ENCODE measurements at regions of chr11 and their contacts with region 1.

Region 1: GRCh38 chr11:111177037-111177871 is 68.3 kb upstream of the POU2AF2 start:
- DNase-seq: peak; percentile 76 to 83 (median 78)
- H3K4me3 ChIP-seq: peak overlapping the region in 1 of 3 experiments; percentile 19
- H3K4me3 Mint-ChIP-seq: peak overlapping the region; percentile 6 to 17
- H3K27ac ChIP-seq: peak overlapping the region; percentile 67 to 78
- H3K27ac Mint-ChIP-seq: peak overlapping the region; percentile 85 to 98 (median 96)
- H3K4me1 ChIP-seq: peaks cover 46 to 49% of the 10 kb centered on the region in 2 donors
- H3K4me1 Mint-ChIP-seq: peaks cover 47% of the 10 kb centered on the region
- H3K27me3 ChIP-seq: no peaks in the 10 kb centered on the region
- H3K27me3 Mint-ChIP-seq: peaks cover 0 to 5% (median 0%) of the 10 kb centered on the region in 3 donors
- CTCF ChIP-seq: no peak

Region 2: GRCh38 chr11:110991661-110992355 is 185.4 kb before region 1 on chr11:
- intact Hi-C with region 1: loop called in 1 of 2 experiments (anchors 10 kb)
- DNase-seq: no peak
- H3K4me3 ChIP-seq: no peak overlapping the region
- H3K4me3 Mint-ChIP-seq: no peak overlapping the region
- H3K27ac ChIP-seq: no peak overlapping the region
- H3K27ac Mint-ChIP-seq: peak overlapping the region in 2 of 7 donors; percentile 9 to 64
- H3K4me1 ChIP-seq: peaks cover 24 to 25% of the 10 kb centered on the region in 2 donors
- H3K4me1 Mint-ChIP-seq: peaks cover 25% of the 10 kb centered on the region
- H3K27me3 ChIP-seq: no peaks in the 10 kb centered on the region
- H3K27me3 Mint-ChIP-seq: peaks cover 1 to 6% (median 3%) of the 10 kb centered on the region in 3 donors
- CTCF ChIP-seq: no peak